PC-3 (cell line): ENCODE measurements at regions of chr21 and their contacts with region 1.

Region 1: DNA sequence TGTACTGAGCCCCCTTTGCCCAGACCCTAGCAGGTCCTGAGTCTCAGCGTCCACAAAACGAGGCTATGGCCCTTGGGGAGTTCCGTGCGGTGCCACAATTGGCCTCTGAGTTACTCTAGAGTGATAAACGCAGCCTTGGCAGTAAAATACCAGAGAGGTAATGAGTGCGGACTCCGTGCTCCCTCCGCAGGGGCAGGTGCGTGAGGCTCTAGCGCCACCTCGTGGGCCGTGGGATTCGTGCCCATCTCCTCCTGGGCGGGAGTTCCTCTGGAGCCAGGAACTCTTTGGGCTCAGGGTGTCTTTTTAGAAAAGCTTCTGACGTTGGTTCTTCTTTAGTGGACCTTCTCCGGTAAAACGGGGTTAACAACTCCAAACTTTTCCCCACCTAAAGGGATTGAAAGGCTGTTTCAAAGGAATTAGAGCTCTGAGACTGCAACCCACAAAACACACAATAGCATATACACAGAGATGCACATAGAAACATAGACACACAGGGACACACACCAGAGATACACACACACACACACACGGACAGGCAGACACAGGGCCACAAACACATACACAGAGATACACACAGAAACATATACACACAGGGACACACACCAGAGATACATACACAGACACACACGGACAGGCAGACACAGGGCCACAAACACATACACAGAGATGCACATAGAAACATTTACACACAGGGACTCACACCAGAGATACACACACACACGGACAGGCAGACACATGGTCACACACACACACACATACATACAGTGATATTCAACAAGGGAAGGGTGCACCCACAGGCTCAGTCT is 99.4 kb downstream of the KCNJ15 start:
- DNase-seq: peak; percentile 87
- ATAC-seq: peak; percentile 84
- H3K4me3 ChIP-seq: no peak overlapping the region
- H3K27ac ChIP-seq: no peak overlapping the region
- H3K4me1 ChIP-seq: peaks cover 14% of the 10 kb centered on the region
- H3K27me3 ChIP-seq: no peaks in the 10 kb centered on the region
- CTCF ChIP-seq: peak; percentile 97

Region 2: DNA sequence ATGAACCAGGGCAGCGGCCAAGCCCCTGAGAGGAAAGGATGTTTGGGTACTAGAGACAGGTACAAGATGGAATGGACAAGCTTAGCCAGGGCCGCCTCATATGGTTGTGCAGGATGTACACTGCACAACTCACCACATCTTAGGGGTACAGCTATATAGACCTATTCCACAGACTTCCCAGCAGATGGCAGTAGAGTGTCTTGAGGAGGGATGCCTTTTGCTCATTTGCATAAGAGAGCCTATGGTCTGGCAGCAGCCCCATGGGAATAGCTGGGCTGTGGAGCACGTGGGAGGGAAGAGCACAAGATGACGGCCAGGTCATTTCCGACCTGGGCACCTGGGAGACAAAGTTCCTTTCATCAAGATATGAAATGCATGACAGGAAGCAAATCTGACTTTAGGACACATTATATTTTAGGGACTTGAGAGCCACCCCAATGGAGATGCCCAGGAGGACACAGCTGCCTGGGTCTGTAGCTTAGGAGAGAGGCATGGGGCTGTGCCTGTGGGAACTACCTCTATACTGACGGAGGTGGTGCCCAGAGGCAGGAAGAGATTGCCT is 655.5 kb before region 1 on chr21:
- CTCF ChIA-PET with region 1: interaction called, 3 read pairs
- POLR2A ChIA-PET with region 1: no interaction called
- intact Hi-C with region 1: loop called (anchors 1 kb)
- DNase-seq: peak; percentile 83
- ATAC-seq: peak; percentile 99
- H3K4me3 ChIP-seq: no peak overlapping the region
- H3K27ac ChIP-seq: no peak overlapping the region
- H3K4me1 ChIP-seq: no peaks in the 10 kb centered on the region
- H3K27me3 ChIP-seq: peaks cover 25% of the 10 kb centered on the region
- CTCF ChIP-seq: peak; percentile 88

Region 3: DNA sequence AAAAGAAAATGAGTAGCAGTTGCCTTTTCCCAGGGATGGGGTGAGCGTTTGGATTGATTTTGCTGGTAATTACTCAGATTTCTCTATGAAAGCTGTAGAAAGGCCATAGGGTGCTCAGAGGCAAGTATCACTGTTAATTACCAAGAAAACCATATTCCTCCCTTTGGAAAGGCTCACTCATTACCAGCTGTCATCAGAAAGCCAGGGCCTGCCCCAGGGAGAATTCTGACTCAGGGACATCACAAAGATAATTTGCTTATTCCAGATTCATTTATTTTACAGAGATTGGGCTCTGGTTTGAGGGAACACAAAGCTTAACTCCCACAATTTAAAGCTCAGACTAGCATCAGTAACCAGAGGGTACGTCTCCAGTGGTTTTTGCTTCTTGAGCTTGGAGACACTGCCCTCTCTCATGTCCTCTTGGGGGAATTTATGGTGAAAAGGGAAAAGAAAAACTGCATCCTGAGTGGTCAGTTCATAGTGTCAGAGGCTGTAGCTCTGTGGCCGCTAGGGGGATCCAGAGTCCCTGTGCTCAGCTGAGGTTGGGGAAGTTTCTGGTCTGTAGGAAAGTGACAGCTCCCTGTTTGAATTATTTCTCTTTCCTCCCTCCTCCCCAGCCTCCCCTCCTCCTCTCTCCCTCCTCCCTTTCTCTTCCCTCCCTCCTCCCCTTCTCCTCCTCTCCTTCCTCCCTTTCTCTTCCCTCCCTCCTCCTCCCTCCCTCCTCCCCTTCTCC is 644.2 kb before region 1 on chr21:
- CTCF ChIA-PET with region 1: no interaction called
- POLR2A ChIA-PET with region 1: no interaction called
- intact Hi-C with region 1: loop called (anchors 1 kb)
- DNase-seq: peak; percentile 79
- ATAC-seq: peak; percentile 99
- H3K4me3 ChIP-seq: no peak overlapping the region
- H3K27ac ChIP-seq: no peak overlapping the region
- H3K4me1 ChIP-seq: 0 out of 2 replicates have a peak, but pooled peaks cover 7% of the 10 kb centered on the region
- H3K27me3 ChIP-seq: peaks cover 18% of the 10 kb centered on the region; the same call in 1 of the 2 replicates
- CTCF ChIP-seq: peak; percentile 91

Region 4: GRCh38 chr21:37758982-37759381 is 597.2 kb before region 1 on chr21:
- CTCF ChIA-PET with region 1: no interaction called
- POLR2A ChIA-PET with region 1: no interaction called
- intact Hi-C with region 1: loop called (anchors 5 kb)
- DNase-seq: peak; percentile 53
- ATAC-seq: peak; percentile 46; the same call in 1 of the 2 replicates
- H3K4me3 ChIP-seq: no peak overlapping the region
- H3K27ac ChIP-seq: no peak overlapping the region
- H3K4me1 ChIP-seq: no peaks in the 10 kb centered on the region
- H3K27me3 ChIP-seq: peaks cover 25% of the 10 kb centered on the region
- CTCF ChIP-seq: peak; percentile 59

Region 5: DNA sequence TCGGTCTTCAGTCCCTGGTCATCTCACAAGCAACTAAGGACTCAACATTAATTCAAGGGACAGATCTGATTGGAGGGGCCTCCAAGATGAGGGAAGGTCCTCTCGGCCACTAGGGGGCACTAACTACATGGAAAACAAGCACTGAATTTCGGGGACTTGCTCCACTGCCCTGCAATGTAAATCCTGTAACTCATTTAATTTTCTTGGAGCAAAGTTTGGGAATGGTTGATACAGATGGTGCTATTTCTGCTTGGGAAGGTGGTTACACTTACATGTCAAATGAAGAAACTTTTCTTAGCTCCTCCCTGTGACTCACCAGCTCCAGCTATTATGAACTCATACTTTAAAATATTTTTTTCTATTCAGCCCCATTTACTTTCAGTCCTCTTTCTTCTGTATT is 196.8 kb before region 1 on chr21:
- CTCF ChIA-PET with region 1: no interaction called
- POLR2A ChIA-PET with region 1: no interaction called
- intact Hi-C with region 1: loop called (anchors 1 kb)
- DNase-seq: peak; percentile 77
- ATAC-seq: peak; percentile 67
- H3K4me3 ChIP-seq: no peak overlapping the region
- H3K27ac ChIP-seq: no peak overlapping the region
- H3K4me1 ChIP-seq: no peaks in the 10 kb centered on the region
- H3K27me3 ChIP-seq: peaks cover 21% of the 10 kb centered on the region; the same call in 1 of the 2 replicates
- CTCF ChIP-seq: peak; percentile 91

Region 6: DNA sequence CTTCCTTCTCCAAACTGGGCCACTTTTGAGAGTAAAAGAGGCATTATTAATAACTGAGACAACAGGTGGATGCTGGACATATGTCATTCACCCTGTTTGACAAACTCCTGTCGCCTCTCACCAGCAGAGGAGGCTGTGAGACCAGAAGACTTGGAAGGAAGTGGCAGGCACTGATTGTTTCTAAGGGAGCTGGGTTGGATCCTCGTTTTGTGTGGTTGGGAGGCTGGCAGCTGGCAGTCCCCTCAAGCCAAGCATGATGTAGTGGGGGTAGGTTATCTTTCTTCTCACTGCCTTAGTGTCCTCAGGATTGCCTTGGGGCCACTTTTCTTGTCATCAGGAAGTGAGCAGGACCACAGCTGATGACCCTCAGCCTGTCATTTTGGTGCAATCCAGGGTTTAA is 185.9 kb before region 1 on chr21:
- CTCF ChIA-PET with region 1: interaction called, 6 read pairs
- POLR2A ChIA-PET with region 1: no interaction called
- intact Hi-C with region 1: loop called (anchors 5 kb)
- DNase-seq: peak; percentile 66
- ATAC-seq: no peak
- H3K4me3 ChIP-seq: no peak overlapping the region
- H3K27ac ChIP-seq: no peak overlapping the region
- H3K4me1 ChIP-seq: peaks cover 15% of the 10 kb centered on the region
- H3K27me3 ChIP-seq: 0 out of 2 replicates have a peak, but pooled peaks cover 3% of the 10 kb centered on the region
- CTCF ChIP-seq: peak; percentile 72

Region 7: DNA sequence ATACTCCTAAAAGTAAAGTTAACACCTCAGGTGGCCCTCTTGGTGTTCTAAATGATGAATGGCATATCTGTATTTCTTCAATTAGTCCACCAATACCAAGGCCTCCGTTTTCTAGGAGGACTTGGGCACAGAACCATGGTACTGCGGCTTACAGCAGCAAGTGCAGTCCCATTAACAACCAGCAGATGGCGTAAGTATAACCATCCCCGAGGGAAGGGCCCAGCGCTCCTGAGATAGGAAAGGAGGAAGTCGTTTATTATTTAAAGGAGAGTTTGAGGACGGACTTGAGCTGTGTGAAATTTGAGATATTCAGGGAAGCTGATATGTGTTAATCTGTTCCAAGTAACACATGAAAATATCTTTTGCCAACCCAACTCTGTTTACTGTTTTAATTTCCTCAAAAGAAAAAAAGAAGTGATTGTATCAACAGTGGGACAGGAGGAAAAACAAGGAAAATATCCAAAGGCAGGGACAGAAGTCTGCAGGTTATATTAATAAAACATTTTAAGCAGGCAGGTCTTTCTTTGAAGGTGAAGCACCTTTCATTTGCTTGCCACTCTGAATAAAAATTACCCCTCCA is 137.1 kb before region 1 on chr21:
- CTCF ChIA-PET with region 1: interaction called, 12 read pairs
- POLR2A ChIA-PET with region 1: no interaction called
- intact Hi-C with region 1: loop called (anchors 1 kb)
- DNase-seq: peak; percentile 90
- ATAC-seq: peak; percentile 76
- H3K4me3 ChIP-seq: no peak overlapping the region
- H3K27ac ChIP-seq: peak overlapping the region; percentile 34
- H3K4me1 ChIP-seq: no peaks in the 10 kb centered on the region
- H3K27me3 ChIP-seq: no peaks in the 10 kb centered on the region
- CTCF ChIP-seq: peak; percentile 96